B cell (primary cell): ENCODE measurements at regions of chr12 and their contacts with region 1.

Region 1: DNA sequence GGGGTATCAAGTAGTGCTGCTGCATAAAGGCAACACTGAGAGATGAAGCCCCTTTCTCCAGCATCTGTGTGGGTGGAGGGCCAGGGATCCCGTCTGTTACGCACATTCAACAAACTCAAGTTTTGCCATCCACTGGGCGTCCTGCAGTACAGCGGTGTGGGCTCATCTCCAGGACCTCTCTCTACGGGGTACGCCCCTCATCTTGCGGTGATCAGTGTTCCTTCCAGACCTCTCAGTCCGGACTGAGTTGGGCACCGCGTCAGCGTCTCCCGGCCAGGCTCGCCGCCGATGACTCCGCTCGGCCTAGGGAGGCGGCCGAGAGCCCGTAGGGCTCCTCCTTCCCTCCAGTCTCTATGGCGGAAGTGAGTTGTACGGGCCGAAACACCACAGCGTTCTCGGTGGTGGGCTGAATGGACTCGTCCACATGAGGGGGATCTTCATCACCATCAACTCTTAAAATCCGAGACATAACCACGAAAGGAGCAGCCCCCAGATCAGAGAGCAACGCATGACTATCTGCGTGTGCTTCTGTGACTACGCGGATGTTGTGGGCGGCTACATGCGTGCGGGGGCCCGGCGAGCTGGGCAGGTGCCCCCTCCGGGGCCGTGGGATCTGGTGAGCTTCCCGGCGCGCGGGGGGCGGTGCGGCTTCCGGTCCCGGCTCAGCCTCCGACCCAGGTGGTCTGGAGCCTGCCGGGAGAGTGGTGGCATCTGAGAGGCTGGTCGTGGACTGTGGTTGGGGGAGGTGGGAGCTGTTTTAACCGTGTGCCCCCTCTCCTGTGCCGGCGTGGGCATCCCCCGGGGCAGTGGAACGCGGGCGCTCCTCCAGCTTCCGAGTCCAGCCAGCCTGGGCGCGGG is at the start of gene ATG101:
- DNase-seq: peak; percentile 98
- ATAC-seq: peak; percentile 94
- H3K4me3 ChIP-seq: peak within 1 kb of the TSS; percentile 65 to 98 (median 93)
- H3K4me3 Mint-ChIP-seq: peak within 1 kb of the TSS; percentile 90
- H3K27ac ChIP-seq: peak within 1 kb of the TSS; percentile 90 to 93
- H3K27ac Mint-ChIP-seq: peak within 1 kb of the TSS; percentile 96
- H3K4me1 ChIP-seq: peaks cover 29 to 48% of the 10 kb centered on the region in 2 donors
- H3K4me1 Mint-ChIP-seq: peaks cover 46% of the 10 kb centered on the region
- H3K27me3 ChIP-seq: peaks cover 0 to 5% (median 0%) of the 10 kb centered on the region in 4 experiments
- H3K27me3 Mint-ChIP-seq: peaks cover 3% of the 10 kb centered on the region
- CTCF ChIP-seq: peak; percentile 79
- total RNA-seq, gene ATG101: 19.4 and 20.0 TPM in 2 replicates

Region 2: GRCh38 chr12:52050761-52051541 is 18.6 kb before region 1 on chr12 and contains the start of gene NR4A1:
- CTCF ChIA-PET with region 1: interaction called, 1,315 read pairs
- POLR2A ChIA-PET with region 1: interaction called, 20 read pairs
- intact Hi-C with region 1: loop called (anchors 1 kb)
- DNase-seq: peak; percentile 99
- ATAC-seq: peak; percentile 80
- H3K4me3 ChIP-seq: peak within 1 kb of the TSS; percentile 73 to 92 (median 86)
- H3K4me3 Mint-ChIP-seq: peak within 1 kb of the TSS; percentile 100
- H3K27ac ChIP-seq: peak within 1 kb of the TSS; percentile 99 to 100
- H3K27ac Mint-ChIP-seq: peak within 1 kb of the TSS; percentile 99
- H3K4me1 ChIP-seq: peaks cover 25 to 38% of the 10 kb centered on the region in 2 donors
- H3K4me1 Mint-ChIP-seq: peaks cover 45% of the 10 kb centered on the region
- H3K27me3 ChIP-seq: no peaks in the 10 kb centered on the region
- H3K27me3 Mint-ChIP-seq: no peaks in the 10 kb centered on the region
- CTCF ChIP-seq: no peak
- total RNA-seq, gene NR4A1: 43.2 and 52.8 TPM in 2 replicates